ENCODE measurements at regions of chr1 and their contacts with region 1.

Region 1: DNA sequence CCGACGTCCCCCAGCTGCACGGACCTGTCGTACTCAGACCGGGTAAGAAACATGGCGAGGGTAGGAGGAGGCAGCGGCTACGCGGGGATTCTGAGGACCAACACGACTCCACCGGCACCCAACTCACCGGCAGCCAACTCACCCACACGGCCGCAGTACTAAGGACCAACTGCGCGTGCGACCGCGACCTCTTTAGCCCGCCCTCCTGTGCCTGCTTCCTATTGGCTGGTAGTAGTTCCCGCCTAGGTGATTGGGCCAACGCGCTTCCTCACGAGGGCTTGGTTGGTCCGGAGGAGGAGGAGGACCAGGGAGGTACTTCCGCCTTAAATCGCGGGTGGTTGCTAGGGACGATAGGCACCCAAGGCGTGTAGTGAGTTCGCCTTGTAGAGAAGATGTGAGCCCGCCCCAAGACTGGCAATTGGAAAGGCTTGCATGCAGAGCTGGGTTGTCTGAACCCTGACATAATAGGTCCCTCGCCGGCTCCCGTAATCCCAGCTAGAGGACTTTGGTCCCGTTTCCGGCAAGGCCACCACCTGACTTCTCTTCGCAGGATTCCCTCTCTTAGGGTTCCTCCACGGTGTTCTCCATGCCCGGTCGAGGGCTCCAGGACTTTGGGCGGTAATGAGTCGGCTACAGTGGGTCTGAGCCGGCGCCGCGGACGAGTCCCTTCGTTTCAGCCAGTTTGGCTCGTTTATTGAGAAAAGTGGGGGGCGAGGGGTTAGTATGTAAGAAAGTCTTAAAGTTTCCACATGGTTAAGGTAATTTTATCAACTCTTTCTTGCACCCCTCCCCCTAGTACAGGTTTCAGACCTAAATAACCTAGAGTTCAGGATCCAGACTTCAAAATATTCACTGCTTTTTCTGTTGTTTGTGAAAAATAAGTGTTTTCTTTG is at the start of gene PSMA5:
- DNase-seq: peak; percentile 98
- H3K4me3 Mint-ChIP-seq: peak within 1 kb of the TSS; percentile 93
- H3K27ac Mint-ChIP-seq: peak within 1 kb of the TSS; percentile 98
- H3K4me1 Mint-ChIP-seq: peaks cover 38% of the 10 kb centered on the region
- H3K27me3 Mint-ChIP-seq: no peaks in the 10 kb centered on the region
- total RNA-seq, gene PSMA5: 217 to 218 TPM

Region 2: GRCh38 chr1:109099938-109100773 is 326.4 kb before region 1 on chr1:
- CTCF ChIA-PET with region 1: interaction called, 3 read pairs
- POLR2A ChIA-PET with region 1: interaction called, 4 read pairs
- intact Hi-C with region 1: loop called (anchors 2 kb)
- DNase-seq: peak; percentile 98
- H3K4me3 Mint-ChIP-seq: peak overlapping the region; percentile 98
- H3K27ac Mint-ChIP-seq: peak overlapping the region; percentile 99
- H3K4me1 Mint-ChIP-seq: peaks cover 14% of the 10 kb centered on the region
- H3K27me3 Mint-ChIP-seq: peaks cover 3% of the 10 kb centered on the region

Region 3: DNA sequence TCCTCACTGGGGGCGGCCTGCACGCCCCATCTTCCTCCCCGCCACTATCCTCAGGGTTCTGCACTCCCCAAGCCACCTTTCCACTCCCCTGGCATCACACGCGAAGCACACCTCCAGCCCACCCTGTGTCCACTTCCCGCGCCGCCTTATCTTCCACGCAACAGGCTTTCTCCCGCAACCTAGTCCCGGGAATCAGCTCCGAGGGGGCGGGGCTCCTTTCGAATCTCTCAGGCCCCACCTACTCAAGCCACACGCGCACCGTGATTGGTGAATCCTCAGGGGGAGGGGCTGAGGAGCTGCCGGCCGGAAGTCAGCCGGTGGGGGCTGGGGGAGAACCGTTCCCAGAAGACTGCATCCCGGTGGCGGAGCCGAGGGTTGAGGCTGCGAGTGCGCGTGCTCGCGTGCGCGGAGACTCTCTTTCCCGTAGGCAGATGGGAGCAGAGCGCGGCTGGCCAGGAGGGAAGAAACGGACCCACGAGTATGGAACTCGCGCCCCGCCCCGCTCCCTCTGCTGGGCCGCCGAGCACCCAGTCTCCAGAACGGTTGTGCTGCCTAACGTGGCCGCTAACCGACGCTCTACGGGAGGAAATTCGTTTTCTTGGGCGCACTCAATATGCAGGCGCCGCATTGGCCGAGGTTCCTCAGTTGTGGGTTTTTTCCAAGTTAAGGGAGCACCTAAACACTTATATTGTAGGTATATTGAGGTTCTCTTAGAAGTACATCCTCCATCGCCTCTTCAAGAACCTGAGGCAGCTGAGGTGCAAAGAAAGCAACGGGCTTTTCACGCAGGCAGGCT is 143.4 kb before region 1 on chr1 and contains the start of gene PSRC1:
- CTCF ChIA-PET with region 1: no interaction called
- POLR2A ChIA-PET with region 1: interaction called, 4 read pairs
- intact Hi-C with region 1: loop called (anchors 1 kb)
- DNase-seq: peak; percentile 94
- H3K4me3 Mint-ChIP-seq: peak within 1 kb of the TSS; percentile 95
- H3K27ac Mint-ChIP-seq: peak within 1 kb of the TSS; percentile 89
- H3K4me1 Mint-ChIP-seq: peaks cover 12% of the 10 kb centered on the region
- H3K27me3 Mint-ChIP-seq: no peaks in the 10 kb centered on the region
- total RNA-seq, gene PSRC1: 14.9 to 16.3 TPM

Region 4: GRCh38 chr1:109466452-109467300 is 40.2 kb after region 1 on chr1 and contains the start of gene SYPL2:
- CTCF ChIA-PET with region 1: no interaction called
- POLR2A ChIA-PET with region 1: no interaction called
- intact Hi-C with region 1: loop called (anchors 5 kb)
- DNase-seq: peak; percentile 34
- H3K4me3 Mint-ChIP-seq: peak within 1 kb of the TSS; percentile 32
- H3K27ac Mint-ChIP-seq: no peak within 1 kb of the TSS
- H3K4me1 Mint-ChIP-seq: peaks cover 3% of the 10 kb centered on the region
- H3K27me3 Mint-ChIP-seq: peaks cover 48% of the 10 kb centered on the region
- total RNA-seq, gene SYPL2: not detected

Region 5: GRCh38 chr1:109493805-109494539 is 67.4 kb after region 1 on chr1 and contains the start of gene CYB561D1:
- CTCF ChIA-PET with region 1: interaction called, 19 read pairs
- POLR2A ChIA-PET with region 1: interaction called, 5 read pairs
- intact Hi-C with region 1: loop called (anchors 2 kb)
- DNase-seq: peak; percentile 93
- H3K4me3 Mint-ChIP-seq: peak within 1 kb of the TSS; percentile 89
- H3K27ac Mint-ChIP-seq: peak within 1 kb of the TSS; percentile 78
- H3K4me1 Mint-ChIP-seq: peaks cover 44% of the 10 kb centered on the region
- H3K27me3 Mint-ChIP-seq: no peaks in the 10 kb centered on the region
- total RNA-seq, gene CYB561D1: 6.6 to 8.7 TPM

Region 6: DNA sequence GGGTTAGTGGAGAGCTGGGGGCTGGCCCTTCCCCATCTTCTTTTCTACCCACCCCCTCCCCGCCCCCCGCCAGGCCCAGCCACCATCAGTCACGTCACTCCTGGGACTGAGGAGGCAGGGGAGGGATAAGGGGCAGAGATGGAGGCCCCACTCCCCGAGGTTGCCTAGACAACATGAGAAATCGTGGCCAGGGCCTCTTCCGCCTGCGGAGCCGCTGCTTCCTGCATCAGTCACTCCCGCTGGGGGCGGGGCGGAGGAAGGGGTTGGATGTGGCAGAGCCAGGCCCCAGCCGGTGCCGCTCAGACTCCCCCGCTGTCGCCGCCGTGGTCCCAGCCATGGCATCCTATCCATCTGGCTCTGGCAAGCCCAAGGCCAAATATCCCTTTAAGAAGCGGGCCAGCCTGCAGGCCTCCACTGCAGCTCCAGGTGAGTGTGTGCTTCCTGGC is 194.3 kb after region 1 on chr1:
- CTCF ChIA-PET with region 1: interaction called, 3 read pairs
- POLR2A ChIA-PET with region 1: no interaction called
- intact Hi-C with region 1: loop called (anchors 1 kb)
- DNase-seq: peak; percentile 98
- H3K4me3 Mint-ChIP-seq: peak overlapping the region; percentile 98
- H3K27ac Mint-ChIP-seq: peak overlapping the region; percentile 96
- H3K4me1 Mint-ChIP-seq: peaks cover 58% of the 10 kb centered on the region
- H3K27me3 Mint-ChIP-seq: no peaks in the 10 kb centered on the region

Region 7: DNA sequence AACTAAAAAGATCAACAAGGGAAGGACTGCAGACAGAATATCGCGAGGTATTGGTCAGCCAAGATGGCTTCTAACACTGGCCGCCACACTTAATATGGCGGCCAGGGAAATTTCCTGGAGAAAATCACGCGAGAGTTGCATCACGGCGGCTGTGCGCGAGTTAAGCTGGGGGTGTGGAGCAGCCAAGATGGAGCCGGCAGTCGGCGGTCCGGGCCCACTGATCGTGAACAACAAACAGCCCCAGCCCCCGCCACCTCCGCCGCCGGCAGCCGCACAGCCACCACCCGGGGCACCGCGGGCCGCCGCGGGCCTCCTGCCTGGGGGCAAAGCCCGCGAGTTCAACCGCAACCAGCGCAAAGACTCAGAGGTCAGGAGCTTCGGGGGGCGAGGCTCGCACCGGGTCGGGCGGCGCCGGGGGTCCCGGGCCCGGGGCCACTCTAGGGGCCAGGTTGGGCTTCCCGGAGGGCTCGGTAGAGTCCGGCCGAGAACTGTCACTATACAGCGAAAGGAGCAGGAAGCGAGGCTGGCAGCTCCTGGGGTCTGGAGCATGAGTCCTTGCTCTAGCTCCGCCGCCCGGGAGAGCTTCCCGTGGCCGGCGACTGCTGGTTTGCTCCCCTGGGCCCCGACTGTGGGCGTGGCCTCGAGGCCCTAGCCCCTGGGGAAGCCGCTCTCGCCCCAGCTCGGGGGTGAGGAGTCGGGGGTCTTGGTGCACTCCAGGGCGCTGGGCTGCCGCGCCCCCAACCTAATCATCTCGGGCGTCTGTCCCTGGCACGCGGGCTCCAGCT is 608.1 kb after region 1 on chr1 and contains the start of gene STRIP1:
- CTCF ChIA-PET with region 1: no interaction called
- POLR2A ChIA-PET with region 1: no interaction called
- intact Hi-C with region 1: loop called (anchors 1 kb)
- DNase-seq: peak; percentile 95
- H3K4me3 Mint-ChIP-seq: peak within 1 kb of the TSS; percentile 82
- H3K27ac Mint-ChIP-seq: peak within 1 kb of the TSS; percentile 92
- H3K4me1 Mint-ChIP-seq: peaks cover 59% of the 10 kb centered on the region
- H3K27me3 Mint-ChIP-seq: no peaks in the 10 kb centered on the region
- total RNA-seq, gene STRIP1: 22.7 to 25.7 TPM

Measured in activated CD4-positive, alpha-beta memory T cell treated with anti-CD3 and anti-CD28 coated beads for 36 hours (primary cell).